ENCODE measurements at regions of chr7 and their contacts with region 1.

Region 1: DNA sequence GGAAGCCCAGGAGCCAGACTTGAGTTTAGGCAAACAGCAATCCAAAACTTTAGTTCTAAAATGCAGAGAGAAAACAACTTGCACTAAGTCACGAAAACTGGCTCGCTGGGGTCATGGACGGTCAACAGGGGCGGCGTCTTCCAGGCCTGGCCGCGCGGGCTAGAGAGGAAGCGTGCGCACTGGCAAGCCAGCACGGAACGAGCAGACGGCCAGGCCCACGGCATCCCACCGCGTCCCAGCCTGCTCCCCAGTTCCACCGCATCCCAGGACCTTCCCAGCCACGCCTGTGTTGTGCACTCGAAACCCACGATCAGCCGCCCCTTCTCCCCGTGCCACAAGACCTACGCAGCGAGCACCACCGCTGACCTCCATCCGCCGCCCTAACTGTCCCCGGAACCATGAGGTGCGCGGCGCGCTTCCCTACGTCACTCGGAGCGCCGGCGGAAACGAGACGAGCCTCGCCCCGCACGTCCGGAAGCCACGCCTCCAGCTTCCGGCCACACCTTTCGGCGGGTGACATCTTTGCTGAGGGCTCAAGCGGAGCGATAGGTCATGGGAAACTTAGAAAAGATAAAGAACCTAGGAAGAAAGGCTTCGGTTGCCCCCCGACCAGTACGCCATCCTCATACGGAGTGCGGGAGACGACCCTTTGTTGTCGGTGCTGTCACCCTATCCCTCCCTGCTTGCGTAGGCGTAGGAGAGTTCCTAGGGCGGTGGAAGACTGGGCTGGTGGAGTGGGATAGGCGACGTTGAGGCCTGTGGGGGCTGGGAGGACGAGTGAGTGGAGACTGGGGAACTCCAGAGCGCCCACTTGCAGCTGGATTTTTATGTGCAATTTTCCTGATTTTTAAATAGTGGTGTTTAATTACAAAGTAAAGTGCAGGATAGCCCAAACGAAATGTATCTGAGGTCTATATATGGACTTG is at the start of gene TBRG4:
- DNase-seq: peak; percentile 96
- H3K4me3 Mint-ChIP-seq: peak within 1 kb of the TSS; percentile 90
- H3K27ac Mint-ChIP-seq: peak within 1 kb of the TSS; percentile 89
- H3K4me1 Mint-ChIP-seq: peaks cover 50% of the 10 kb centered on the region
- H3K27me3 Mint-ChIP-seq: peaks cover 10% of the 10 kb centered on the region
- total RNA-seq, gene TBRG4: 98.8 to 103 TPM

Region 2: GRCh38 chr7:44805950-44806349 is 305.6 kb before region 1 on chr7:
- CTCF ChIA-PET with region 1: no interaction called
- POLR2A ChIA-PET with region 1: no interaction called
- DNase-seq: no peak
- H3K4me3 Mint-ChIP-seq: no peak overlapping the region
- H3K27ac Mint-ChIP-seq: no peak overlapping the region
- H3K4me1 Mint-ChIP-seq: peaks cover 14% of the 10 kb centered on the region
- H3K27me3 Mint-ChIP-seq: no peaks in the 10 kb centered on the region

Region 3: DNA sequence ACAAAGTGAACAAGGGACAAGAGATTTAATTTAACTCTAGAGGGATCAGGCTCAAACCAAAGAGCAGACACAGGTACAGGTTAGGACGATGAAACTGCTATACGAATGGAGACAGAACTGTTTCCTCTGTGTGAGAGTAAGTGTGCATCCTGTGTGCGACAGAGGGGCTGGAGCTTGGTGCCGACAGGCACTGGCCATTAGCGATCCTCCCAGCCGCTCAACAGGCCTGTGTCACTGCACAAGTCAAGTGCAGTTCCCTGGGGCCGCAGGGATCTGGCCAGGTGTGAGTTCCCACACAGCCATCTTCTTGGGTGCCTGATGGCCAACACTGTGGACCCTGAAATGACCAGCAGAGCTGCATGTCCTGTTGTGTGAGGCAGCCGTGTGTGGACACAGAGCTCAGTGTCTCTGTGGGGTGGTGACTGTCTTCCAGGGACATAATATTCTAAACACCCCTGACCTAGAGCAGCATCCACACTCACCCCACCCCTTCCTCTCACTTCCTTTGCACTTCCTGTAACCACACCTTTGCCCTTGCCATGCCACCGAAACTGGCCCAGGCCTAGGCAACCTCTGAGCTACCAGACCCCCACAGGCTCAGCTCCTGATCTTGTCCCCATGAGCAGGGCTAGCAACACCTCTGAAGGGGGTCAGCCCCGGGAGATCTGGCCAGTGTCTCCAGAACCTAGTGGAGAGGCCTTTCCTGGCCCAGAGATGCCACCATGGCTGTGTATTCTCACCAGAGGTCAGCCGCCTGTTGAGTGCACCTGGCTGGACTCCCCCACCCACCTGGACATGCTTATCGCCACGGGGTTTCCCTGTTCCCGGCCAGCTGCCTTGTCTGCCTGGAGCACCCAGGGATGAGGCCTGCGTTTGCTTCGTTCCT is 11.7 kb after region 1 on chr7:
- CTCF ChIA-PET with region 1: interaction called, 25 read pairs
- POLR2A ChIA-PET with region 1: interaction called, 149 read pairs
- DNase-seq: peak; percentile 49
- H3K4me3 Mint-ChIP-seq: peak overlapping the region; percentile 55
- H3K27ac Mint-ChIP-seq: peak overlapping the region; percentile 93
- H3K4me1 Mint-ChIP-seq: peaks cover 31% of the 10 kb centered on the region
- H3K27me3 Mint-ChIP-seq: no peaks in the 10 kb centered on the region

Measured in activated CD4-positive, alpha-beta memory T cell treated with anti-CD3 and anti-CD28 coated beads, Interleukin-2, amount 10 ng/mL, durations not matched to agents 7 days and 5 days (primary cell).